Natural killer cell (primary cell): ENCODE measurements at regions of chr14 and their contacts with region 1.

Region 1: GRCh38 chr14:39232554-39233415 is 930 bp upstream of the MIA2 start:
- DNase-seq: peak in 1 of 2 donors; percentile 43
- ATAC-seq: peak; percentile 48 to 74 (median 63)
- H3K4me3 ChIP-seq: no peak overlapping the region
- H3K4me3 Mint-ChIP-seq: peak overlapping the region; percentile 79
- H3K27ac ChIP-seq: peak overlapping the region; percentile 82
- H3K27ac Mint-ChIP-seq: peak overlapping the region; percentile 83 to 92
- H3K4me1 ChIP-seq: peaks cover 27% of the 10 kb centered on the region
- H3K4me1 Mint-ChIP-seq: peaks cover 44 to 53% of the 10 kb centered on the region in 2 donors
- H3K27me3 ChIP-seq: no peaks in the 10 kb centered on the region
- H3K27me3 Mint-ChIP-seq: no peaks in the 10 kb centered on the region
- CTCF ChIP-seq: no peak

Region 2: DNA sequence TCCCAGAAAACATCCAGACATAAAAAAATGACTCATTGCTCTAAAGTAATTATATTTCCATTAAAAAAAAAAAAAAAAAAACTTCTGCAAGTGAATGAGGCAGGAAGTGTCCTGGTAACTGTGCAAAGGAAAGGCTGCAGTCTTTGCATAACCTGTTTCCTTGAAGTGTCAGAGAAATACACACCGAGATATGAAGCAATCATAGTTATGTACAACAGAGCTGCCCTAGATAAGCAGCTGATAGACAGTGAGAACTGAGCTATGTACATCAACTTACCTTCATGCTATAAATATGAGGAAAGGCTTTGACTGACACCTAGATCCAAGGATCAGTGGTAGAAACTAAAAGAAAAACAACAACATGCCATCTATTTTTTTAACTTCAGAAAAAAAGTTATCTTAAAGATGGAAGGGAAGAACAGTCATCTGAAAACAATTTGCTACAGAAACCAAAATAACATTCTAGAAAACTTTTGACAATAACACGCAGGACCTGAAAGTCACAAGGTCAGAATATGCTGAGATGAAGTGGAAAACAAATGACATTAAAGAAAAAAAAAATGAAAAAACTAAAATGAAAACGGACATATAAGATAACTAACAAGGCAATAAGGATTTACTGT is 392.9 kb before region 1 on chr14:
- intact Hi-C with region 1: no loop called
- DNase-seq: no peak
- ATAC-seq: no peak
- H3K4me3 ChIP-seq: no peak overlapping the region
- H3K4me3 Mint-ChIP-seq: no peak overlapping the region
- H3K27ac ChIP-seq: no peak overlapping the region
- H3K27ac Mint-ChIP-seq: no peak overlapping the region
- H3K4me1 ChIP-seq: no peaks in the 10 kb centered on the region
- H3K4me1 Mint-ChIP-seq: no peaks in the 10 kb centered on the region
- H3K27me3 ChIP-seq: no peaks in the 10 kb centered on the region
- H3K27me3 Mint-ChIP-seq: no peaks in the 10 kb centered on the region
- CTCF ChIP-seq: no peak

Region 3: GRCh38 chr14:39168591-39168990 is 64.2 kb before region 1 on chr14:
- intact Hi-C with region 1: no loop called
- DNase-seq: no peak
- ATAC-seq: no peak
- H3K4me3 ChIP-seq: no peak overlapping the region
- H3K4me3 Mint-ChIP-seq: peak overlapping the region; percentile 93
- H3K27ac ChIP-seq: no peak overlapping the region
- H3K27ac Mint-ChIP-seq: peak overlapping the region; percentile 21 to 99
- H3K4me1 ChIP-seq: peaks cover 6% of the 10 kb centered on the region
- H3K4me1 Mint-ChIP-seq: peaks cover 40 to 41% of the 10 kb centered on the region in 2 donors
- H3K27me3 ChIP-seq: no peaks in the 10 kb centered on the region
- H3K27me3 Mint-ChIP-seq: no peaks in the 10 kb centered on the region
- CTCF ChIP-seq: no peak

Region 4: GRCh38 chr14:39368261-39368959 is 135.6 kb after region 1 on chr14:
- intact Hi-C with region 1: loop called (anchors 10 kb)
- DNase-seq: peak in 1 of 2 donors; percentile 52
- ATAC-seq: no peak
- H3K4me3 ChIP-seq: no peak overlapping the region
- H3K4me3 Mint-ChIP-seq: no peak overlapping the region
- H3K27ac ChIP-seq: no peak overlapping the region
- H3K27ac Mint-ChIP-seq: peak overlapping the region; percentile 35 to 65
- H3K4me1 ChIP-seq: no peaks in the 10 kb centered on the region
- H3K4me1 Mint-ChIP-seq: peaks cover 26% of the 10 kb centered on the region in 2 donors
- H3K27me3 ChIP-seq: no peaks in the 10 kb centered on the region
- H3K27me3 Mint-ChIP-seq: no peaks in the 10 kb centered on the region
- CTCF ChIP-seq: peak; percentile 46

Region 5: DNA sequence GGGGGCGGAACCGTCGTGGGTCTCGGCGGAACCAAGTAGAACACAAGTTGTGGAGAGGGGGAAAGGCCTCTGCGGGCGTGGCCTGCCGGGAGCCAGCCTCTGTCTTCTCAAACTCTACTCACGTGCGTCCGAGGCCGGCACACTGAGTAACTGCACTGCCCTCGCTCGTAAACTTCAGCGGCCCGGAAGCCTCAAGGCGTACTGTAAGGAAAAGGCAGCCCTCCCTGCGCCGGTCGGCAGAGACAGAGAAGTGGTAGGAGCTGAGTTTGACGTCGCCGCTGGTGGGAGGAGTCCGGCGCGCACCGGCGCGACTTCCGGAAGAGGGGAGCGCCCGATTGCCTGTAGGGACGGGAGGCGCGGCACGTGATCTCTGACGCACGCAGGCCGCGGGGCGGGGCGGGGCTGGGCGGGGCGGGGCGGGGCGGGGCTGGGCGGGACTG is 199.4 kb after region 1 on chr14 and contains the start of gene FBXO33:
- intact Hi-C with region 1: loop called (anchors 2 kb)
- DNase-seq: peak; percentile 96 to 98
- ATAC-seq: peak; percentile 84 to 93 (median 86)
- H3K4me3 ChIP-seq: peak within 1 kb of the TSS; percentile 98
- H3K4me3 Mint-ChIP-seq: peak within 1 kb of the TSS; percentile 100
- H3K27ac ChIP-seq: peak within 1 kb of the TSS; percentile 100
- H3K27ac Mint-ChIP-seq: peak within 1 kb of the TSS; percentile 100
- H3K4me1 ChIP-seq: peaks cover 22% of the 10 kb centered on the region
- H3K4me1 Mint-ChIP-seq: peaks cover 43 to 52% of the 10 kb centered on the region in 2 donors
- H3K27me3 ChIP-seq: no peaks in the 10 kb centered on the region
- H3K27me3 Mint-ChIP-seq: no peaks in the 10 kb centered on the region
- CTCF ChIP-seq: no peak
- total RNA-seq, gene FBXO33: 45.7 to 54.1 (median 50.2) TPM